Naive thymus-derived CD4-positive, alpha-beta T cell (primary cell): ENCODE measurements at regions of chr14 and their contacts with region 1.

Region 1: GRCh38 chr14:68283378-68284123 is 464.0 kb downstream of the RAD51B start:
- DNase-seq: peak; percentile 20 to 70 (median 62)
- ATAC-seq: peak; percentile 78
- H3K4me3 ChIP-seq: peak overlapping the region; percentile 14
- H3K4me3 Mint-ChIP-seq: peak overlapping the region; percentile 44 to 86 (median 72)
- H3K27ac ChIP-seq: peak overlapping the region; percentile 74
- H3K27ac Mint-ChIP-seq: peak overlapping the region; percentile 93 to 99 (median 97)
- H3K4me1 ChIP-seq: peaks cover 36 to 70% of the 10 kb centered on the region in 2 donors
- H3K4me1 Mint-ChIP-seq: peaks cover 44 to 96% (median 86%) of the 10 kb centered on the region in 7 donors
- H3K27me3 ChIP-seq: no peaks in the 10 kb centered on the region
- H3K27me3 Mint-ChIP-seq: no peaks in the 10 kb centered on the region

Region 2: GRCh38 chr14:68261092-68261842 is 22.3 kb before region 1 on chr14:
- CTCF ChIA-PET with region 1: interaction called, 3 read pairs
- POLR2A ChIA-PET with region 1: interaction called, 12 read pairs
- intact Hi-C with region 1: no loop called
- DNase-seq: peak in 4 of 9 donors; percentile 23 to 32 (median 29)
- ATAC-seq: peak; percentile 41
- H3K4me3 ChIP-seq: peak overlapping the region; percentile 10
- H3K4me3 Mint-ChIP-seq: peak overlapping the region in 9 of 10 donors; percentile 59 to 83 (median 75)
- H3K27ac ChIP-seq: peak overlapping the region; percentile 64
- H3K27ac Mint-ChIP-seq: peak overlapping the region; percentile 73 to 99 (median 92)
- H3K4me1 ChIP-seq: peaks cover 0 to 49% of the 10 kb centered on the region in 2 donors
- H3K4me1 Mint-ChIP-seq: peaks cover 41 to 85% (median 80%) of the 10 kb centered on the region in 7 donors
- H3K27me3 ChIP-seq: no peaks in the 10 kb centered on the region
- H3K27me3 Mint-ChIP-seq: no peaks in the 10 kb centered on the region

Region 3: GRCh38 chr14:68369281-68370056 is 85.9 kb after region 1 on chr14:
- CTCF ChIA-PET with region 1: interaction called, 3 read pairs
- POLR2A ChIA-PET with region 1: interaction called, 4 read pairs
- intact Hi-C with region 1: loop called (anchors 2 to 5 kb)
- DNase-seq: no peak
- ATAC-seq: no peak
- H3K4me3 ChIP-seq: no peak overlapping the region
- H3K4me3 Mint-ChIP-seq: peak overlapping the region in 7 of 10 donors; percentile 42 to 61 (median 47)
- H3K27ac ChIP-seq: no peak overlapping the region
- H3K27ac Mint-ChIP-seq: peak overlapping the region in 5 of 9 donors; percentile 14 to 71 (median 18)
- H3K4me1 ChIP-seq: peaks cover 0 to 11% of the 10 kb centered on the region in 2 donors
- H3K4me1 Mint-ChIP-seq: peaks cover 11 to 68% (median 55%) of the 10 kb centered on the region in 7 donors
- H3K27me3 ChIP-seq: no peaks in the 10 kb centered on the region
- H3K27me3 Mint-ChIP-seq: no peaks in the 10 kb centered on the region

Region 4: GRCh38 chr14:68487805-68488590 is 204.4 kb after region 1 on chr14:
- CTCF ChIA-PET with region 1: no interaction called
- POLR2A ChIA-PET with region 1: interaction called, 11 read pairs
- intact Hi-C with region 1: loop called in 1 of 2 experiments (anchors 10 kb)
- DNase-seq: no peak
- ATAC-seq: no peak
- H3K4me3 ChIP-seq: no peak overlapping the region
- H3K4me3 Mint-ChIP-seq: no peak overlapping the region
- H3K27ac ChIP-seq: no peak overlapping the region
- H3K27ac Mint-ChIP-seq: peak overlapping the region in 2 of 9 donors; percentile 61 to 64
- H3K4me1 ChIP-seq: peaks cover 12 to 27% of the 10 kb centered on the region in 2 donors
- H3K4me1 Mint-ChIP-seq: peaks cover 24 to 64% (median 52%) of the 10 kb centered on the region in 7 donors
- H3K27me3 ChIP-seq: no peaks in the 10 kb centered on the region
- H3K27me3 Mint-ChIP-seq: no peaks in the 10 kb centered on the region

Region 5: DNA sequence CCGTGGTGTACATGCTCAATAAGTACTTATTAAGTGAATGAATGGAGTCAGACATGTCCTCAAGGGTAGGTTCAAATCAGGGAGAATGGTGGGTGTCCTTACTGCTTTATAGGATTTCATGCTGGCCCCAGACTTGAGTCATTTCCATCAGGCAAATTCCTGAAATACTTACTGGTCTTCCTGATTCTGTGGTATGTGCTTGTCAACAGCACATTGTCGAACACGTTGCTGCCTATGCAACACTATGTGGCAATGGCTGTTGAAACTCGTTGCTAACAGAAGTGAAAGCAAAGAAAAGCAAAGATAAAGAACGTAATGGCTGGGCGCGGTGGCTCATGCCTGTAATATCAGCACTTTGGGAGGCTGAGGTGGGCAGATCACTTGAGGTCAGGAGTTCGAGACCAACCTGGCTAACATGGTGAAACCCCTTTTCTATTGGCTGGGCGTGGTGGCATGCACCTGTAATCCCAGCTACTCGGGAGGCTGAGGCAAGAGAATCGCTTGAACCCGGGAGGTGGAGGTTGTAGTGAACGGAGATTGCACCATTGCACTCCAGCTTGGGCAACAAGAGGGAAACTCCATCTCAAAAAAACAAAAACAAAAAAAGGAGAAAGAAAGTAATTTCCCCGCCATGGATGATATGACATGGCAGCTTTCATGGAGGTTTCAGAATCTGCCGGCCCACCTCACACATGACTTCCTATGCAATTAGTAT is 294.4 kb after region 1 on chr14:
- CTCF ChIA-PET with region 1: no interaction called
- POLR2A ChIA-PET with region 1: no interaction called
- intact Hi-C with region 1: no loop called
- DNase-seq: no peak
- ATAC-seq: peak; percentile 71
- H3K4me3 ChIP-seq: no peak overlapping the region
- H3K4me3 Mint-ChIP-seq: no peak overlapping the region
- H3K27ac ChIP-seq: no peak overlapping the region
- H3K27ac Mint-ChIP-seq: peak overlapping the region in 1 of 9 donors; percentile 16
- H3K4me1 ChIP-seq: no peaks in the 10 kb centered on the region
- H3K4me1 Mint-ChIP-seq: peaks cover 0 to 8% (median 0%) of the 10 kb centered on the region in 7 donors
- H3K27me3 ChIP-seq: no peaks in the 10 kb centered on the region
- H3K27me3 Mint-ChIP-seq: no peaks in the 10 kb centered on the region

Region 6: DNA sequence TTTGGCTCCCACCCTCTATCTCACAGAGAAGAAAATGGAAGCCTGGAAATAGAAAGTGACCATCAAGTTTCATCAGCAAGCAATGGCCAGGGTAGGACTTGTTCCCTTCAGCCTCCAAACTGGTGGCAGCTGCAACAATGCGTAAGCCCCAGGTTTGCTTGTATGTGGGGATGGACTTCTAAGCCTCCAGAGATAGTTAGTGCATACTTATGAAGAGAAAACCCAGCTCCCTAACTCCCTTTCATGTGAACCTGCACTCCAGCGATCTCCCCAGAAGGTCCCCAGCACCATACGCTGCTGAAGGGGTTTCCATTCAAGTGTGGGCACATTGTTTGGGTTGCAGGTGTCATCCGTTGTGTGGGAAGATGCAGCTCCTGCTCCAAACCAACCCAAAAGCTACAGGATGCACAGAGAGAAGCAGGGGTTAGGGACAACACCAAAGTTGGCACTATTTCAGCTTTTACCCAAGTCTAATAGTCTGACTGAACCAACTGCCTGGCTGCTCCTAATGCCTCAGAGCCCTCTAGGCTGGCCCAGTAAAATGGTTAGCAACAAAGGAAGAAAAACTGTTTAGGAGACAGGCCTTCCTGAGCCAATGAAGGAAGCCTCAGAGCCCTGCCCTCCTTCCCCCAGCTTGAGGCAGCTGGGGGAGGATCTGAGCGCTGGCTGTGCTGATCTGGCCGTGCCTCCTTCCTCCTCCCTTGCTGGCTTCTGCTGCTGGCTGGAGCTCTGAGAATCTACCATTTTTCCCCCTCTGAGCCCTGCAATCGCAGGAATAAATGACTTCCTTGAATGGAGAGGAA is 497.0 kb after region 1 on chr14:
- CTCF ChIA-PET with region 1: interaction called, 6 read pairs
- POLR2A ChIA-PET with region 1: interaction called, 180 read pairs
- intact Hi-C with region 1: loop called in 1 of 2 experiments (anchors 10 kb)
- DNase-seq: peak in 5 of 9 donors; percentile 26 to 39 (median 33)
- ATAC-seq: peak; percentile 31
- H3K4me3 ChIP-seq: peak overlapping the region; percentile 57
- H3K4me3 Mint-ChIP-seq: peak overlapping the region; percentile 74 to 87 (median 84)
- H3K27ac ChIP-seq: peak overlapping the region; percentile 65
- H3K27ac Mint-ChIP-seq: peak overlapping the region; percentile 82 to 94 (median 92)
- H3K4me1 ChIP-seq: peaks cover 62 to 68% of the 10 kb centered on the region in 2 donors
- H3K4me1 Mint-ChIP-seq: peaks cover 39 to 90% (median 82%) of the 10 kb centered on the region in 7 donors
- H3K27me3 ChIP-seq: no peaks in the 10 kb centered on the region
- H3K27me3 Mint-ChIP-seq: no peaks in the 10 kb centered on the region